ENCODE measurements at regions of chrX and their contacts with region 1.

Region 1: GRCh38 chrX:118536687-118537461 is 41.3 kb downstream of the DOCK11 start:
- DNase-seq: peak; percentile 64
- H3K4me3 Mint-ChIP-seq: peak overlapping the region; percentile 58
- H3K27ac Mint-ChIP-seq: peak overlapping the region; percentile 92
- H3K4me1 Mint-ChIP-seq: peaks cover 77% of the 10 kb centered on the region
- H3K27me3 Mint-ChIP-seq: no peaks in the 10 kb centered on the region

Region 2: DNA sequence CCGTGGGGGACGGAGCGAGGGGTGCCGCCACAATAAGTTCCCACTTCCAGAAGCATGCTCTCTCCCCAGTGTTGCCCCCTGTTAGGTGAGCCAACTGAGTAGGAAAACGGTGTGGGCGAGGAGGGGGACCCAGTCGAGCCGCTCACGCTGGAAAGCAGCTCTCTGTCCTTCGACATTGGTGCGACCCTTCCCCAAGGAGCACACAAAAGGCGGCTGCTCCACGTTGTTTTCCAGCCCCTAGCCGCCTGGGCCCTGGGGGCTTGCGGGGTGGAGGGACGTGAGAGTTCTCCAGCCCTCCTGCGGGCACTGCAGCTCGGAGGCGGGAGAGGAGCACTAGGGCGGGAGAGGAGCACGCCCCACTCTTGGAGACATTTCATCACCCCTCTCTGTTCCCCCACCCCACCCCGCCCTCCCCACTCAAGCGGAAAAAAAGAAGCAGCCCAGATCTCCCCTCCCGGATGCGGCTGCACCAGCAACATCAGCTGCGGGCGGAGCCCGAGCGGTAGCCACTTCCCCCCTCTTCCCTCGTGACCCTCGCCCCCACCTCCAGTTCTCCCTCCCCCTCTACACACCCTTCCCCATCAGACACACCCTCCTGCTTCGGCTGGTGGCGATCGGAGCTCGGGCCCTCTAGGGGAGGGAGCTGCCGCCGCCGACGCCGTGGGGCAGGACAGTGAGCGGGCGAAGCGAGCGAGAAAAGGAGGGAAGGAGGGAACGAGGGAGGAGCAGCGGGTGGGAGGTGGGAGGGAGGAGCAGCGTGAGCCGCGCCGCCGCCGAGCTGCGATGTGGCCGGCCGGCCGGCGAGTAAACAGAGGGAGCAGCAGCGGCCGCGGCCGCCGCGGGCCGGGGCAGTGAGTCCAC is 41.6 kb before region 1 on chrX and contains the start of gene DOCK11:
- CTCF ChIA-PET with region 1: interaction called, 12 read pairs
- POLR2A ChIA-PET with region 1: interaction called, 12 read pairs
- intact Hi-C with region 1: loop called (anchors 1 kb)
- DNase-seq: peak; percentile 90
- H3K4me3 Mint-ChIP-seq: peak within 1 kb of the TSS; percentile 99
- H3K27ac Mint-ChIP-seq: peak within 1 kb of the TSS; percentile 97
- H3K4me1 Mint-ChIP-seq: peaks cover 24% of the 10 kb centered on the region
- H3K27me3 Mint-ChIP-seq: no peaks in the 10 kb centered on the region
- total RNA-seq, gene DOCK11: 47.5 to 50.4 TPM

Region 3: GRCh38 chrX:118552121-118552900 is 15.4 kb after region 1 on chrX:
- CTCF ChIA-PET with region 1: no interaction called
- POLR2A ChIA-PET with region 1: no interaction called
- intact Hi-C with region 1: loop called (anchors 1 kb)
- DNase-seq: peak; percentile 36
- H3K4me3 Mint-ChIP-seq: no peak overlapping the region
- H3K27ac Mint-ChIP-seq: no peak overlapping the region
- H3K4me1 Mint-ChIP-seq: peaks cover 35% of the 10 kb centered on the region
- H3K27me3 Mint-ChIP-seq: no peaks in the 10 kb centered on the region

Region 4: DNA sequence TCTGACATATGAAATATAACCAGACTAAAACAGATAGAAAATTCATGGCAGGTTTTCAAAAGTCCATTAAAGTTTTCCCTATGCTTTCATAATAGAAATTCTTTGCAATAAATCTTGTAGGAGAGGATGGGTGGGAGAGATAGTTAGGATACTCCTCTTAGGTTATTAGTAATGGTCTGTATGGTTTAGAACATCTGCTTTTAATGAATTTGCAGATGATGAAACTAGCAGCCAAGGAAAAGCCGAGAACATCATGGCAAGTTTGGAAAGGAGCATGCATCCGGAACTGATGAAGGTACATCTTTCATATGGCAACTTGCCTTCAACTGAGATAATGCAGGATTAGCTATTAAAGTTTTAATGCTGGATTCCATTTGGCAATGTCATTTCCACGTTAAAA is 29.5 kb after region 1 on chrX:
- CTCF ChIA-PET with region 1: no interaction called
- POLR2A ChIA-PET with region 1: interaction called, 4 read pairs
- intact Hi-C with region 1: loop called (anchors 1 kb)
- DNase-seq: no peak
- H3K4me3 Mint-ChIP-seq: no peak overlapping the region
- H3K27ac Mint-ChIP-seq: no peak overlapping the region
- H3K4me1 Mint-ChIP-seq: peaks cover 41% of the 10 kb centered on the region
- H3K27me3 Mint-ChIP-seq: no peaks in the 10 kb centered on the region

Region 5: GRCh38 chrX:118872102-118872566 is 335.3 kb after region 1 on chrX:
- CTCF ChIA-PET with region 1: no interaction called
- POLR2A ChIA-PET with region 1: no interaction called
- intact Hi-C with region 1: no loop called
- DNase-seq: no peak
- H3K4me3 Mint-ChIP-seq: no peak overlapping the region
- H3K27ac Mint-ChIP-seq: no peak overlapping the region
- H3K4me1 Mint-ChIP-seq: peaks cover 3% of the 10 kb centered on the region
- H3K27me3 Mint-ChIP-seq: no peaks in the 10 kb centered on the region

Region 6: GRCh38 chrX:119685225-119686066 is 1148.6 kb after region 1 on chrX:
- CTCF ChIA-PET with region 1: no interaction called
- POLR2A ChIA-PET with region 1: no interaction called
- intact Hi-C with region 1: loop called (anchors 10 kb)
- DNase-seq: peak; percentile 73
- H3K4me3 Mint-ChIP-seq: peak overlapping the region; percentile 88
- H3K27ac Mint-ChIP-seq: peak overlapping the region; percentile 99
- H3K4me1 Mint-ChIP-seq: peaks cover 48% of the 10 kb centered on the region
- H3K27me3 Mint-ChIP-seq: no peaks in the 10 kb centered on the region

Measured in activated CD4-positive, alpha-beta memory T cell treated with anti-CD3 and anti-CD28 coated beads for 36 hours (primary cell).